ENCODE measurements at regions of chr12 and their contacts with region 1.

Region 1: GRCh38 chr12:124767066-124767821 is 96.4 kb downstream of the SCARB1 start:
- DNase-seq: peak; percentile 43
- H3K4me3 ChIP-seq: no peak overlapping the region
- H3K27ac ChIP-seq: no peak overlapping the region
- H3K4me1 ChIP-seq: peaks cover 11% of the 10 kb centered on the region
- H3K27me3 ChIP-seq: no peaks in the 10 kb centered on the region
- CTCF ChIP-seq: peak; percentile 78 to 98

Region 2: GRCh38 chr12:124036674-124037109 is 730.6 kb before region 1 on chr12:
- CTCF ChIA-PET with region 1: no interaction called
- dilution Hi-C with region 1: no loop called
- in situ Hi-C with region 1: loop called (anchors 10 kb)
- intact Hi-C with region 1: loop called (anchors 1 kb)
- DNase-seq: no peak
- H3K4me3 ChIP-seq: no peak overlapping the region
- H3K27ac ChIP-seq: no peak overlapping the region
- H3K4me1 ChIP-seq: no peaks in the 10 kb centered on the region
- H3K27me3 ChIP-seq: no peaks in the 10 kb centered on the region
- CTCF ChIP-seq: peak; percentile 82 to 95

Region 3: GRCh38 chr12:124321040-124321481 is 446.2 kb before region 1 on chr12:
- CTCF ChIA-PET with region 1: no interaction called
- dilution Hi-C with region 1: no loop called
- in situ Hi-C with region 1: no loop called
- intact Hi-C with region 1: loop called (anchors 1 kb)
- DNase-seq: peak; percentile 48
- H3K4me3 ChIP-seq: no peak overlapping the region
- H3K27ac ChIP-seq: no peak overlapping the region
- H3K4me1 ChIP-seq: no peaks in the 10 kb centered on the region
- H3K27me3 ChIP-seq: no peaks in the 10 kb centered on the region
- CTCF ChIP-seq: peak; percentile 96 to 97

Region 4: GRCh38 chr12:124512667-124513296 is 254.5 kb before region 1 on chr12:
- CTCF ChIA-PET with region 1: no interaction called
- dilution Hi-C with region 1: no loop called
- in situ Hi-C with region 1: no loop called
- intact Hi-C with region 1: loop called (anchors 2 kb)
- DNase-seq: peak; percentile 95
- H3K4me3 ChIP-seq: peak overlapping the region in 1 of 3 experiments; percentile 11
- H3K27ac ChIP-seq: peak overlapping the region; percentile 62
- H3K4me1 ChIP-seq: peaks cover 88% of the 10 kb centered on the region
- H3K27me3 ChIP-seq: no peaks in the 10 kb centered on the region
- CTCF ChIP-seq: no peak

Region 5: GRCh38 chr12:124599074-124599999 is 167.9 kb before region 1 on chr12:
- CTCF ChIA-PET with region 1: no interaction called
- dilution Hi-C with region 1: no loop called
- in situ Hi-C with region 1: no loop called
- intact Hi-C with region 1: no loop called
- DNase-seq: peak; percentile 71
- H3K4me3 ChIP-seq: no peak overlapping the region
- H3K27ac ChIP-seq: no peak overlapping the region
- H3K4me1 ChIP-seq: no peaks in the 10 kb centered on the region
- H3K27me3 ChIP-seq: no peaks in the 10 kb centered on the region
- CTCF ChIP-seq: peak in 1 of 2 donors; percentile 22

Region 6: GRCh38 chr12:124661341-124661740 is 105.9 kb before region 1 on chr12:
- CTCF ChIA-PET with region 1: no interaction called
- dilution Hi-C with region 1: no loop called
- in situ Hi-C with region 1: no loop called
- intact Hi-C with region 1: no loop called
- DNase-seq: no peak
- H3K4me3 ChIP-seq: no peak overlapping the region
- H3K27ac ChIP-seq: no peak overlapping the region
- H3K4me1 ChIP-seq: no peaks in the 10 kb centered on the region
- H3K27me3 ChIP-seq: no peaks in the 10 kb centered on the region
- CTCF ChIP-seq: peak in 1 of 2 donors; percentile 2

Region 7: GRCh38 chr12:124727264-124727721 is 40.0 kb before region 1 on chr12:
- CTCF ChIA-PET with region 1: no interaction called
- dilution Hi-C with region 1: no loop called
- in situ Hi-C with region 1: no loop called
- intact Hi-C with region 1: loop called (anchors 2 kb)
- DNase-seq: peak; percentile 80
- H3K4me3 ChIP-seq: no peak overlapping the region
- H3K27ac ChIP-seq: peak overlapping the region; percentile 37
- H3K4me1 ChIP-seq: peaks cover 8% of the 10 kb centered on the region
- H3K27me3 ChIP-seq: no peaks in the 10 kb centered on the region
- CTCF ChIP-seq: peak in 1 of 2 donors; percentile 15

Region 8: DNA sequence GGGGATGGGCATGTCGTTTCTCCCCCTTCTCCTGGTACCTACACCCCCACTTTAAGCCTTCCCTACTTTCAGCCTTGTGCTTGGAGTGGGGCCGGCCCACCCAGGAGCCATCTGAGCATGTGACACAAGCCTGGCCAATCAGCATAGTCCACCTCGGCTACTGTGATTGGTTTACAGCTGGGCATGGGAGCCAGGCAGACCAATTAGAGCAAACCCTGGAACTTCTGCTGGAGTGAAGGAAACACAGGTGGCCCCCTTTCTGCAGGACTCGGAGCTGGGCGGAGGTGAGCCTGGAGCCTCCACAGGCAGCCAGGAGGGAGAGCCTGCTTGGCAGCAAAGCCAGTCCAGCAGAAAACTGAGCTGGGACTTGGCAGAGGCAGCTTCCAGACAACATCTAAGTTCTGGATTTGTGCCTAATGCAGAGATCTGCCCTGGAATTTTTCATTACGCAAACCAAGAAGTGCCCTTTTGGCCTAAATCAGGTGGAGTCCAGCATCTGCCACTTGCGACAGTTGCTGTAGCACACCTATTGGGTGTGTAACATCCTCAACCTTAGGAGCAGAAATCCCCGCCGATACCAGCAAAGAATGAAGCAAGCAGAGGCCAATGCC is 36.9 kb after region 1 on chr12:
- CTCF ChIA-PET with region 1: no interaction called
- dilution Hi-C with region 1: no loop called
- in situ Hi-C with region 1: no loop called
- intact Hi-C with region 1: no loop called
- DNase-seq: no peak
- H3K4me3 ChIP-seq: no peak overlapping the region
- H3K27ac ChIP-seq: no peak overlapping the region
- H3K4me1 ChIP-seq: peaks cover 9% of the 10 kb centered on the region
- H3K27me3 ChIP-seq: no peaks in the 10 kb centered on the region
- CTCF ChIP-seq: no peak

Region 9: DNA sequence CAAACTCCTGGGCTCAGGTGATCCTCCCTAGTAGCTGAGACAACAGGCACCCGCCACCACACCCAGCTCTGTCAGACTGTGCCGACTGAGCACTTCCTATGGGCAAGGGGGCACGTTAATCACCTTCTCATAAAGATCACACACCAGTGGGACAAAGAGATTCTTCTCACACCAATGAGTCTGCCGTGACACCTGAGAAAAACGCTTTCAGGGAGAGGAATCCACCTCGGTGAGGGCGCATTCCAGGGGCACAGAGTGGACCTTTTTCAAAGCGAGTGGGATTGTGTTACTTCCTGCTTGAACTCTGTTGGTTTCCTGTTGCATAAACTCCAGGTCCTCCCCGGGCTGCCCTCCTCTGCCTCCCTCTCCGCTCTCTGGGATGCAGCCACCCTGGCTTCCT is 113.9 kb after region 1 on chr12:
- CTCF ChIA-PET with region 1: no interaction called
- dilution Hi-C with region 1: no loop called
- in situ Hi-C with region 1: no loop called
- intact Hi-C with region 1: no loop called
- DNase-seq: no peak
- H3K4me3 ChIP-seq: no peak overlapping the region
- H3K27ac ChIP-seq: no peak overlapping the region
- H3K4me1 ChIP-seq: no peaks in the 10 kb centered on the region
- H3K27me3 ChIP-seq: no peaks in the 10 kb centered on the region
- CTCF ChIP-seq: no peak

Measured in mammary epithelial cell (primary cell).